Gastrocnemius medialis (tissue), 4 donors: ENCODE measurements at regions of chr1 and their contacts with region 1.

Region 1: DNA sequence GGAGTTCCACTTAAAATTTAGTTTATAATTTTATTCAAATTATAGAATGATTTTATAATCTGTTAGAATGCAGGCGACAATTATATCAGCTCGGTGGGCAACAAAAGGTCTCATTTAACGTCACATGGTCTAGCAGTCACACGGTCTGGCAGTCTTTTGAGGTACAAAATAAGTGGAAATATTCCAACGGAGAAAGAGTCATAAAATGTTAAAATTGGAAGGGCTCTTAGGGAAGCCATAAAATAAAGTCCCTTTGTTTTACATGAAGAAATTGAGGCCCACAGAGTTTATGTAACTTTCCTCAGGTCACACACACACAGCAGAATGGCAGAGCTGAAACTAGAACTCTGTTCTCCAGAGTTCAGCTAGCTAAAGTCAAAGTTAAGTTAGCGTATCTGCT is 84.4 kb upstream of the QSOX1 start:
- DNase-seq: no peak
- ATAC-seq: no peak
- H3K4me3 ChIP-seq: no peak overlapping the region
- H3K27ac ChIP-seq: no peak overlapping the region
- H3K4me1 ChIP-seq: no peaks in the 10 kb centered on the region
- H3K27me3 ChIP-seq: no peaks in the 10 kb centered on the region
- CTCF ChIP-seq: no peak
- POLR2A ChIP-seq: no peak

Region 2: GRCh38 chr1:180003026-180003695 is 67.1 kb before region 1 on chr1:
- in situ Hi-C with region 1: no loop called
- intact Hi-C with region 1: no loop called
- DNase-seq: no peak
- ATAC-seq: peak in 1 of 2 donors; percentile 36
- H3K4me3 ChIP-seq: no peak overlapping the region
- H3K27ac ChIP-seq: peak overlapping the region; percentile 42 to 59 (median 48)
- H3K4me1 ChIP-seq: peaks cover 22 to 24% of the 10 kb centered on the region in 2 donors
- H3K27me3 ChIP-seq: no peaks in the 10 kb centered on the region
- CTCF ChIP-seq: no peak
- POLR2A ChIP-seq: no peak

Region 3: DNA sequence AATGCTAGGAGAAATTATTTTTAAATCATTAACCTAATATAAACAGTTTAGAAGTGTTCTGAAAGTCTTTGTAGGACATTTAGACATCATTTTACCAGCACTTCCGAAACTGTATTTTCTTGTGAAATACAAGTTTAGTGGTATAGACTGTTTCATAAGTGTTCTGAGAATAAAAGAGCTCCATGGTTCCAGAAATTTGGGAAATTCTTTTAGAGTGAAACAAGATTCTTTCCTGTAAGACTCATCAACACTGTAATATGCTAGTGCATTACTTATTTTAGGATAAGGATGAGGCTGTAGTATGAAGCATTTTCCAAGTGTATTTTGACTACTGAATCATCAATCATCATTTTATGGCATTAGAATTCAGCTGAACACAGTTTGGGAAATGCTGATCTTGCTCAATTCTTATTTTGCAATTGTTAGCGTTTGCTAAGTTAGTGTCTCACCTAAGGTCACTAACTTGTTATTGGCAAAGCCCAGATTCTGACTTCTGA is 42.3 kb before region 1 on chr1:
- in situ Hi-C with region 1: loop called in 1 of 4 experiments (anchors 10 kb)
- intact Hi-C with region 1: no loop called
- DNase-seq: no peak
- ATAC-seq: peak in 1 of 2 donors; percentile 39
- H3K4me3 ChIP-seq: no peak overlapping the region
- H3K27ac ChIP-seq: no peak overlapping the region
- H3K4me1 ChIP-seq: no peaks in the 10 kb centered on the region
- H3K27me3 ChIP-seq: no peaks in the 10 kb centered on the region
- CTCF ChIP-seq: no peak
- POLR2A ChIP-seq: no peak

Region 4: GRCh38 chr1:180131510-180131909 is 61.2 kb after region 1 on chr1:
- in situ Hi-C with region 1: no loop called
- intact Hi-C with region 1: no loop called
- DNase-seq: no peak
- ATAC-seq: no peak
- H3K4me3 ChIP-seq: no peak overlapping the region
- H3K27ac ChIP-seq: no peak overlapping the region
- H3K4me1 ChIP-seq: no peaks in the 10 kb centered on the region
- H3K27me3 ChIP-seq: no peaks in the 10 kb centered on the region
- CTCF ChIP-seq: no peak
- POLR2A ChIP-seq: no peak

Region 5: DNA sequence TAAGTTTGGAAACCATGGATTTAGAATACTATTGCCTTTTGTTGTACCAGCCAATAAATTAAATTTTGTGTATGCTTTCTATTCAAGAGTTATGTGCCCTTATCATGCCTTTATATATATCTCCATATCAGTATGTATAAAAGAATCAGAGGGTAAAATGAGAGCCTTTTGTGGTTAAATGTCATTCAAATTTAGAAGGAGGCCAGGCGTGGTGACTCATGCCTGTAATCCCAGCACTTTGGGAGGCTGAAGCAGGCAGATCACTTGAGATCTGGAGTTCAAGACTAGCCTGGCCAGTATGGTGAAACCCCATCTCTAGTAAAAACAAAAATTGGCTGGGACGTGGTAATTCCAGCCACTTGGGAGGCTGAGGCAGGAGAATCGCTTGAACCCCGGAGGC is 650.5 kb after region 1 on chr1:
- in situ Hi-C with region 1: no loop called
- intact Hi-C with region 1: no loop called
- DNase-seq: no peak
- ATAC-seq: no peak
- H3K4me3 ChIP-seq: no peak overlapping the region
- H3K27ac ChIP-seq: no peak overlapping the region
- H3K4me1 ChIP-seq: peaks cover 8 to 19% of the 10 kb centered on the region in 2 donors
- H3K27me3 ChIP-seq: no peaks in the 10 kb centered on the region
- CTCF ChIP-seq: no peak
- POLR2A ChIP-seq: no peak